ENCODE measurements at regions of chr12 and their contacts with region 1.

Region 1: GRCh38 chr12:111519083-111519482 is 80.0 kb downstream of the ATXN2 start:
- DNase-seq: no peak
- ATAC-seq: no peak
- H3K4me3 ChIP-seq: no peak overlapping the region
- H3K27ac ChIP-seq: no peak overlapping the region
- H3K4me1 ChIP-seq: no peaks in the 10 kb centered on the region
- H3K27me3 ChIP-seq: no peaks in the 10 kb centered on the region

Region 2: DNA sequence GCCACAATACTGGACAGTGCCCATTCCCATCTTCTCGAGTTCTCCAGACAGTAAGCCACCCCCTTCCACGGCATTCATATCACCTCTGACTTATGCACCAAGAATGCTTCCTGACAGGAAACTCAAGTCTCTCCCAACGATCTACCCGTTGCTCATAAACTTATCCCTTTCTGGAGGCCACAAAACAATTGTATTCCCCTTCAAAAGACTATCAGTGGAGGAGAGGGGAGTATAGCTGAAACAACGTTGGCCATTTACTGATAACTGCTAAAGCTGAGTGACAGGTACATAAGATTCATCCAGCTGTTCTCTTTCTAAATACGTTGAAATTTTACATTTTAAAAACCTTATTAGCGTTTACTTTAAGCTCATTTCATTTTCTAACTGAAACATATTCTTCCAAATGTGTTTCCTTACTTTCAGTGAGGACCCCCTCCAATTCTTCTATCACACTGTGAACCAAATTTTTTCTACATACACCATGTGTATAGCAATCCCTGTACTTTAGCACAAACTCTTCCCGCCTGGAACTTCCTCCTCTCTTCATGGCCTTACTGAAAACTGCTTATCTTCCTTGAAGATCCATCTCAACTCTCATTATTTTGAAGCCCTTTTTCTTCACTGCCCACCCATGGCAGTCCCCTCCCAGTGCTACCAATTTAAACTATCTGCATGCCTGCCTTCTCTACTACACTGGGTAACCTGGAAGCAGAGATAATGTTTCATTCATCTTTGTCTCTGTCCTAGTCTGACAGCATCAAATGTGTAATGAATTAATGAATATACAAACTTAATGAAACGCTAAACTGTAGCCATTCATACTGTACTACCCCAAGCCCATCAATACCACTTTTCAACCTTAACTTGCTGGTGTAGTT is 51.2 kb after region 1 on chr12:
- intact Hi-C with region 1: no loop called
- DNase-seq: no peak
- ATAC-seq: no peak
- H3K4me3 ChIP-seq: no peak overlapping the region
- H3K27ac ChIP-seq: no peak overlapping the region
- H3K4me1 ChIP-seq: peaks cover 3 to 4% of the 10 kb centered on the region in 2 donors
- H3K27me3 ChIP-seq: no peaks in the 10 kb centered on the region

Region 3: GRCh38 chr12:111673503-111673902 is 154.4 kb after region 1 on chr12:
- intact Hi-C with region 1: loop called in 1 of 2 experiments (anchors 10 kb)
- DNase-seq: no peak
- ATAC-seq: no peak
- H3K4me3 ChIP-seq: no peak overlapping the region
- H3K27ac ChIP-seq: peak overlapping the region in 1 of 2 donors; percentile 40
- H3K4me1 ChIP-seq: no peaks in the 10 kb centered on the region
- H3K27me3 ChIP-seq: no peaks in the 10 kb centered on the region